ENCODE measurements at regions of chr17 and their contacts with region 1.

Region 1: GRCh38 chr17:27569257-27569722 is 61.7 kb upstream of the LGALS9 start:
- DNase-seq: no peak

Region 2: GRCh38 chr17:27430882-27431491 is 138.3 kb before region 1 on chr17:
- in situ Hi-C with region 1: loop called (anchors 25 kb)
- DNase-seq: no peak

Measured in G401 (cell line).